Mammary epithelial cell (primary cell): ENCODE measurements at regions of chr6 and their contacts with region 1.

Region 1: DNA sequence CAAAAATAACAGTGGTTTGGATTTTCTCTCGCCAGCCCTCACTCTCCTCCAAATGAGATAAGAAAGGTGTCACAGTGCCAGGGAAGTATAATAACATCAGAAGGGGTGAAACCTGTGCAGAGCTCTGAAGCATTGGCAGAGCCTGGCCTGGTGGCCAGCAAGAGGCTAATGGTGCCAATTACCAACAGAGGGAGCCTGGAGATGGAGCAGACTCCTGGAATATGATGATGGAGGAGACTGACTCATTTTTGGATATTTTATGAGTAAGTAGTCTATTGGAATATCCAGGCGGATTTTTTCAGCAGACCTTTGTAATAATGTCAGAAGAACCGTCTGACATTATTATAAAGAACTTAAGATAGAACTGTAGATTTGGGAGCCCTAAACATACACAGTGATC is 442.6 kb upstream of the MARCKS start:
- DNase-seq: peak; percentile 76
- H3K4me3 ChIP-seq: no peak overlapping the region
- H3K27ac ChIP-seq: no peak overlapping the region
- H3K4me1 ChIP-seq: peaks cover 13% of the 10 kb centered on the region
- H3K27me3 ChIP-seq: no peaks in the 10 kb centered on the region
- CTCF ChIP-seq: peak; percentile 60 to 84

Region 2: GRCh38 chr6:113122060-113122459 is 292.5 kb before region 1 on chr6:
- CTCF ChIA-PET with region 1: no interaction called
- dilution Hi-C with region 1: no loop called
- in situ Hi-C with region 1: no loop called
- intact Hi-C with region 1: loop called (anchors 10 kb)
- DNase-seq: peak; percentile 77
- H3K4me3 ChIP-seq: no peak overlapping the region
- H3K27ac ChIP-seq: no peak overlapping the region
- H3K4me1 ChIP-seq: peaks cover 24% of the 10 kb centered on the region
- H3K27me3 ChIP-seq: no peaks in the 10 kb centered on the region
- CTCF ChIP-seq: peak; percentile 43 to 54

Region 3: DNA sequence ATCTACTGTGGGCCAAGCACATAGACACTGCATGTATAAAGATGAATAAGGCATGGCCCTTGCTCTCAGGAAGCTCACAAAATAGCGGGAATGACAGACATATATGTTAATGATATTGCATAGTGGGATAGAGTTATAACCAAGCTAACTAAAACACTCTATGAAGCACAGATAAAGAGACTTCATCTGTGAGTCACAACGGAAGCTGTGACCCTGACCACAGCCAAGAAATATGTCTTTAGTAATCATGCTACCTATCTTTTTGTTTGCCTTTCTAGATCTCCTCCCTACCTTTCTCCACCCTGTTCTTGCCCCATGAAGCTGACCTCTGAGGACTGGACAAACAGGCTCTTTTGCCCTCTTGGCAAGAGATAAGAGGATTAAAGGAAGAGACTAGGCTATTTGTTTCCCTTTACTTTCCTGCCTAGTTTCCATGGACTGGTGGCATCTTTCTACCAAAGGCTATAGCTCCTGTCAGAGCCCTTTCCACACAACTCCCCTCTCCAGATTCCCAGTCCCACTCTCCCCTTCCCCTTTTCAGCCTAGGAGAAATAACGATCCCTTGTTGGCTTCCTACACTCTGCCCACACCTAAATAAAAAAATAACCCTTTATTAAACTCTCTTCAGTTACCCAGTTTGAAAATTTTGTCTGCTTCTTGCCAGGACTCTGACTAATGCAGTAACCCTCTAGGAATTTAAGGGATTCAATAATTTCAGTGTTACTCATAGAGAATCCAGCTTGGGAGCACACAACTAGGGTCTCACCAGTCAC is 62.3 kb before region 1 on chr6:
- CTCF ChIA-PET with region 1: no interaction called
- dilution Hi-C with region 1: no loop called
- in situ Hi-C with region 1: no loop called
- intact Hi-C with region 1: loop called (anchors 5 kb)
- DNase-seq: peak; percentile 75
- H3K4me3 ChIP-seq: no peak overlapping the region
- H3K27ac ChIP-seq: peak overlapping the region; percentile 75
- H3K4me1 ChIP-seq: peaks cover 45% of the 10 kb centered on the region
- H3K27me3 ChIP-seq: no peaks in the 10 kb centered on the region
- CTCF ChIP-seq: no peak

Region 4: GRCh38 chr6:113570641-113571040 is 156.1 kb after region 1 on chr6:
- CTCF ChIA-PET with region 1: no interaction called
- dilution Hi-C with region 1: no loop called
- in situ Hi-C with region 1: no loop called
- intact Hi-C with region 1: loop called (anchors 1 kb)
- DNase-seq: no peak
- H3K4me3 ChIP-seq: no peak overlapping the region
- H3K27ac ChIP-seq: no peak overlapping the region
- H3K4me1 ChIP-seq: no peaks in the 10 kb centered on the region
- H3K27me3 ChIP-seq: no peaks in the 10 kb centered on the region
- CTCF ChIP-seq: peak; percentile 11 to 41

Region 5: DNA sequence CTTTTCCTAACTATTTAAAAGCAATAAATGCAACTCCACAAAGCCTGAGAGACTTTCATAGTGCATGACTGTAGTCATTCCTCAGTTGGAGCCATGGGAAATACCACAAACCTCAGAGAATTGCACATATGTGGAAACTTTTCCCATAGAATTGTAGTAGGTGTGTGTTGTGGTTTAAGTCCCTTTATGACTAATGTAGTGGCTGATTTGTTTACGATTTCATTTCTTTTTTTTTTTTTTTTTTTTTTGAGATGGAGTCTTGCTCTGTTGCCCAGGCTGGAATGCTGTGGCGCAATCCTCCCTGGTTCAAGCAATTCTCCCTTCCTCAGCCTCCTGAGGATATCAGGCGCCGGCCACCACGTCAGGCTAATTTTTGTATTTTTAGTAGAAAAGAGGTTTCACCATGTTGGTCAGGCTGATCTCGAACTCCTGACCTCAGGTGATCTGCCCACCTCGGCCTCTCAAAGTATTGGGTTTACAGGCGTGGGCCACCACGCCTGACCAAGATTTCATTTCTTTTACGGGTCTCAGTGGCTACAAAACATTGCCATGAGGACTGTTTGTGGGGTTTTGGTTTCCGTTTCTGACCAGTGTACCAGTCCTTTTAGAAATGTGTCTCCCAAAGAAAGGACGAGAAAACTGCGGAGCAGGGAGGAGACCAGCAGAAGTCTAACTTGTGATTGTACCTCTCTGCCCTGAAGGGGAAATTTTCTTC is 230.5 kb after region 1 on chr6:
- CTCF ChIA-PET with region 1: no interaction called
- dilution Hi-C with region 1: no loop called
- in situ Hi-C with region 1: no loop called
- intact Hi-C with region 1: loop called (anchors 5 kb)
- DNase-seq: peak; percentile 97
- H3K4me3 ChIP-seq: no peak overlapping the region
- H3K27ac ChIP-seq: peak overlapping the region; percentile 86
- H3K4me1 ChIP-seq: peaks cover 25% of the 10 kb centered on the region
- H3K27me3 ChIP-seq: peaks cover 3% of the 10 kb centered on the region
- CTCF ChIP-seq: no peak

Region 6: GRCh38 chr6:113879186-113880096 is 464.9 kb after region 1 on chr6:
- CTCF ChIA-PET with region 1: no interaction called
- dilution Hi-C with region 1: no loop called
- in situ Hi-C with region 1: loop called (anchors 10 to 25 kb)
- intact Hi-C with region 1: loop called (anchors 1 kb)
- DNase-seq: peak; percentile 64
- H3K4me3 ChIP-seq: no peak overlapping the region
- H3K27ac ChIP-seq: no peak overlapping the region
- H3K4me1 ChIP-seq: peaks cover 6% of the 10 kb centered on the region
- H3K27me3 ChIP-seq: no peaks in the 10 kb centered on the region
- CTCF ChIP-seq: peak; percentile 71 to 87